A673 (cell line): ENCODE measurements at regions of chr19 and their contacts with region 1.

Region 1: DNA sequence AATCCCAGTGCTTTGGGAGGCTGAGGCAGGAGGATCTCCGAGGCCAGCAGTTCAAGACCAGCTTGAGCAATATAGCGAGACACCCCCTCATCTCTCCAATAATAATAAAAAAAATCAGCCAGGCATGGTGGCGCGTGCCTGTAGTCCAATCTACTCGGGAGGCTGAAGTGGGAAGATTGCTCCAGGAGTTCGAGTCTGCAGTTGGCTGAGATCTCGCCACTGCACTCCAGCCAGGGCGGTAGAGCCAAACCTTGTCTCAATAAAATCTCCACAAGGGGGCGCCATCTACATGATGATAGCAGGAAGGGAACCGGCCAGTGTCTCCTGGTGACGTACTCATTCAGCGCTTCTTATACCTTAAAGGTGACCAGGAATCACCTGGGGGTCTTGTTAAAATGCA is 13.6 kb upstream of the C5AR1 start:
- DNase-seq: peak; percentile 87
- H3K4me3 ChIP-seq: no peak overlapping the region
- H3K27ac ChIP-seq: no peak overlapping the region
- H3K4me1 ChIP-seq: no peaks in the 10 kb centered on the region
- H3K27me3 ChIP-seq: no peaks in the 10 kb centered on the region
- CTCF ChIP-seq: peak; percentile 80

Region 2: GRCh38 chr19:47348819-47349795 is 53.1 kb after region 1 on chr19 and contains the start of gene DHX34:
- CTCF ChIA-PET with region 1: interaction called, 5 read pairs
- POLR2A ChIA-PET with region 1: interaction called, 11 read pairs
- intact Hi-C with region 1: no loop called
- DNase-seq: peak; percentile 99
- H3K4me3 ChIP-seq: peak within 1 kb of the TSS; percentile 67
- H3K27ac ChIP-seq: peak within 1 kb of the TSS; percentile 76
- H3K4me1 ChIP-seq: peaks cover 8% of the 10 kb centered on the region
- H3K27me3 ChIP-seq: no peaks in the 10 kb centered on the region
- CTCF ChIP-seq: peak; percentile 99
- total RNA-seq, gene DHX34: 24.5 and 29.6 TPM in 2 replicates

Region 3: GRCh38 chr19:47391510-47392223 is 95.6 kb after region 1 on chr19:
- CTCF ChIA-PET with region 1: interaction called, 7 read pairs
- POLR2A ChIA-PET with region 1: no interaction called
- intact Hi-C with region 1: loop called (anchors 1 kb)
- DNase-seq: peak; percentile 77
- H3K4me3 ChIP-seq: no peak overlapping the region
- H3K27ac ChIP-seq: no peak overlapping the region
- H3K4me1 ChIP-seq: no peaks in the 10 kb centered on the region
- H3K27me3 ChIP-seq: no peaks in the 10 kb centered on the region
- CTCF ChIP-seq: peak; percentile 90

Region 4: DNA sequence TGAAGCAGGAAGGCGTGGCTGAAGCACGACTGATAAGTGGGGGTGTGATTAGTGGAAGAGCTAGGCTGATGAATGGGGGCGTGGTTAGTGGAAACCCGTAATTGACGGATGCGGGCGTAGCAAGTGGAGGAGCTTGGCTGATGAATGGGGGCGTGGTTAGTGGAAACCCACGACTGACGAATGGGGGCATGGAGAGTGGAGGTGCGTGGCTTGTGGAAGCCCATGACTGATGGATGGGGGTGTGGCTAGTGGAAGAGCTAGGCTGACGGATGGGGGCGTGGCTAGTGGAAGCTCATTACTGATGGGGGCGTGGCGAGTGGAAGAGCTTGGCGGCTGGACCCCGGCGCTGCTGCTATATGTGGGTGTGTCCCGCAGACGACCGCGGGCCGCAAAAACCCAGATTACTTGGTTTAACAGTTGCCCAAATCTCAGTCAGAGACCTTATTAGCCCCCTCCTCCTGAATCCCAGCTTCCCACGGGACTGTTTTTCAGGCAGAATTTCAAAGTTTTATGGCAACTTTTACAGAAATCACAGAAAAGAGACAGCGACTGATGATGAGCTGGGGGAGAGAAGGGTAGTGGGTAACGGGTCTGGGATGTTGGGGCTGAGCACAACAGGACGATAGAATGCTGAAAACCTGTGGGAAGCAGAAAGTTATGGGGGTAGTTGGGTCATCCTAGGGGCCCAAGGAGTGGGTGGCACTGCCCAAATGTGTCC is 132.3 kb after region 1 on chr19:
- CTCF ChIA-PET with region 1: interaction called, 16 read pairs
- POLR2A ChIA-PET with region 1: no interaction called
- intact Hi-C with region 1: loop called (anchors 1 kb)
- DNase-seq: peak; percentile 100
- H3K4me3 ChIP-seq: peak overlapping the region; percentile 36
- H3K27ac ChIP-seq: peak overlapping the region; percentile 82
- H3K4me1 ChIP-seq: peaks cover 17% of the 10 kb centered on the region
- H3K27me3 ChIP-seq: peaks cover 4% of the 10 kb centered on the region
- CTCF ChIP-seq: no peak

Region 5: DNA sequence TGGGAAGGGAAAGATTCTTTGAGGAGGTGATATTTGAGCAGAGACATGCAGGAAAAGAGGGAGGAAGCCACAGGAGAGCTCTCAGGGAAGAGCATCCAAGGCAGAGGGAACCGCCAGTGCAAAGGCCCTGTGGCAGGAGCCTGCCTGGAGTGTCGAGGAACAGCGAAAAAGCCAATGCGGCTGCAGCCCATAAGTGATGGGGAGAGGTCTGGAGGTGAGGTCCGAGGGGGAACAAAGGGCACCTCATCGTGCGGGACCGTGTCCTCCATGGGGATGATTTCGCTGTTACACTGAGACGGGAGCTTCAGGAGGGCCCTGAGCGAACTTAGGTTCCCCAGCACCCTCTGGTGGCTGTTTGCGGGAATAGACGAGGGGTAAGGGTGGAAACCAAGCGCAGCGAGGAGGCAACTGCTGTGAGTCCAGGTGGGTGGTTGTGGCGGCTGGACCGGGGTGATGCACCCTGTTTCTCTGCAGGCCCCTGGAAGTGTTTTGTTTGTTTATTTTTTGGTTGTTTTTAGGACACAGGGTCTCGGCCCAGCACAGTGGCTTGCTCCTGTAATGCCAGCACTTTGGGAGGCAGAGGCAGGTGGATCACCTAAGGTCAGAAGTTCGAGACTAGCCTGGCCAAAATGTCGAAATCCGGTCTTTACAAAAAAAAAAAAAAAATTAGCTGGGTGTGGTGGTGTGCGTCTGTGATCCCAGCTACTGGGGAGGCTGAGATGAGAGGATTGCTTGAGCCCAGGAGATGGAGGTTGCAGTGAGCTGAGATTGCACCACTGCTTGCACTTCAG is 411.3 kb after region 1 on chr19:
- CTCF ChIA-PET with region 1: no interaction called
- POLR2A ChIA-PET with region 1: no interaction called
- intact Hi-C with region 1: loop called (anchors 5 kb)
- DNase-seq: peak; percentile 86
- H3K4me3 ChIP-seq: no peak overlapping the region
- H3K27ac ChIP-seq: no peak overlapping the region
- H3K4me1 ChIP-seq: peaks cover 6% of the 10 kb centered on the region
- H3K27me3 ChIP-seq: no peaks in the 10 kb centered on the region
- CTCF ChIP-seq: peak; percentile 81